Activated naive CD8-positive, alpha-beta T cell treated with anti-CD3 and anti-CD28 coated beads, Interleukin-2, amount 10 ng/mL, durations not matched to agents 7 days and 5 days (primary cell): ENCODE measurements at regions of chr1 and their contacts with region 1.

Region 1: GRCh38 chr1:153939016-153939415 is 7.5 kb downstream of the DENND4B start:
- DNase-seq: no peak
- ATAC-seq: no peak
- H3K4me3 Mint-ChIP-seq: no peak overlapping the region
- H3K27ac Mint-ChIP-seq: no peak overlapping the region
- H3K4me1 Mint-ChIP-seq: peaks cover 12% of the 10 kb centered on the region
- H3K27me3 Mint-ChIP-seq: no peaks in the 10 kb centered on the region

Region 2: GRCh38 chr1:153646672-153647374 is 292.2 kb before region 1 on chr1:
- POLR2A ChIA-PET with region 1: no interaction called
- DNase-seq: no peak
- ATAC-seq: no peak
- H3K4me3 Mint-ChIP-seq: peak overlapping the region; percentile 43
- H3K27ac Mint-ChIP-seq: peak overlapping the region; percentile 79
- H3K4me1 Mint-ChIP-seq: peaks cover 35% of the 10 kb centered on the region
- H3K27me3 Mint-ChIP-seq: no peaks in the 10 kb centered on the region

Region 3: DNA sequence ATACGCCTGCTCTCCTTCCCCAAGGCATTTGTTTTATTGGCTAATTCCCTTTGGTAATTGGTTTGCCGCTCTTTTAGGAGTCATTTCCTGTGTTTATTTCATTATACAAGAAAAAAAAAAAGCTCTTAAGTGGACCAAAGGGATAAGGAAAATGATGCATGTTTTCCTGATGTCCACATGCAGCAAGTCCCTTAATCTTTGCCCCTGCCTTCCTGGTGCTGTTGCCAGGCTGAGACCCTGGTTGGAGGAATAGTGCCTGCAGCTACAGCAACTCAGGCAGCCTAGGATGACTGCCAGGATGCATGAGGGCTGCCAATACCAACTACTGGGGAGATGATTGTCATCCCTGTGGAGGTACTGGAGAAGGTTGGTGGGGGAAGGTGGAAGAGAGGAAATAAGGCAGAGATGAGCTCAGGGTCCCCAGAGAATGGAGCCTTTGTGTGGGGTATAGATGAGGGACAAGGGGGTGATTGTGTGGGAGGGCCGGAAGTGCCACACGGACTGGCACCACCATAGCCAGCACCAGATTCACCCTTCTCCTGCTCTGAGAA is 10.2 kb before region 1 on chr1:
- POLR2A ChIA-PET with region 1: interaction called, 101 read pairs
- DNase-seq: peak; percentile 13
- ATAC-seq: no peak
- H3K4me3 Mint-ChIP-seq: no peak overlapping the region
- H3K27ac Mint-ChIP-seq: peak overlapping the region; percentile 82
- H3K4me1 Mint-ChIP-seq: peaks cover 14% of the 10 kb centered on the region
- H3K27me3 Mint-ChIP-seq: no peaks in the 10 kb centered on the region